ENCODE measurements at regions of chrX and their contacts with region 1.

Region 1: GRCh38 chrX:30713061-30713525 is 59.9 kb downstream of the GK start:
- DNase-seq: peak in 3 of 4 experiments; percentile 5 to 63 (median 38)
- ATAC-seq: peak; percentile 88
- H3K4me3 ChIP-seq: no peak overlapping the region
- H3K27ac ChIP-seq: no peak overlapping the region
- H3K4me1 ChIP-seq: no peaks in the 10 kb centered on the region
- H3K27me3 ChIP-seq: no peaks in the 10 kb centered on the region
- CTCF ChIP-seq: peak; percentile 72 to 81 (median 73)
- EP300 ChIP-seq: no peak
- POLR2A ChIP-seq: no peak
- RAD21 ChIP-seq: peak; percentile 73 to 83

Region 2: GRCh38 chrX:30196322-30196721 is 516.8 kb before region 1 on chrX:
- CTCF ChIA-PET with region 1: no interaction called
- POLR2A ChIA-PET with region 1: no interaction called
- in situ Hi-C with region 1: no loop called
- intact Hi-C with region 1: no loop called
- DNase-seq: peak; percentile 17 to 49 (median 40)
- ATAC-seq: peak; percentile 73
- H3K4me3 ChIP-seq: no peak overlapping the region
- H3K27ac ChIP-seq: no peak overlapping the region
- H3K4me1 ChIP-seq: no peaks in the 10 kb centered on the region
- H3K27me3 ChIP-seq: no peaks in the 10 kb centered on the region
- CTCF ChIP-seq: peak in 2 of 3 experiments; percentile 4 to 43; a peak in 3 of 6 replicates
- EP300 ChIP-seq: no peak
- POLR2A ChIP-seq: no peak
- RAD21 ChIP-seq: no peak; a peak in 1 of 4 replicates

Region 3: GRCh38 chrX:30570505-30570904 is 142.6 kb before region 1 on chrX:
- CTCF ChIA-PET with region 1: interaction called, 6 read pairs
- POLR2A ChIA-PET with region 1: no interaction called
- in situ Hi-C with region 1: loop called (anchors 5 kb)
- intact Hi-C with region 1: loop called (anchors 1 kb)
- DNase-seq: peak in 3 of 4 experiments; percentile 17 to 21 (median 18)
- ATAC-seq: no peak
- H3K4me3 ChIP-seq: no peak overlapping the region
- H3K27ac ChIP-seq: no peak overlapping the region
- H3K4me1 ChIP-seq: no peaks in the 10 kb centered on the region
- H3K27me3 ChIP-seq: no peaks in the 10 kb centered on the region
- CTCF ChIP-seq: peak in 1 of 3 experiments; percentile 55; a peak in 3 of 6 replicates
- EP300 ChIP-seq: no peak
- POLR2A ChIP-seq: no peak
- RAD21 ChIP-seq: peak; percentile 39 to 49

Region 4: DNA sequence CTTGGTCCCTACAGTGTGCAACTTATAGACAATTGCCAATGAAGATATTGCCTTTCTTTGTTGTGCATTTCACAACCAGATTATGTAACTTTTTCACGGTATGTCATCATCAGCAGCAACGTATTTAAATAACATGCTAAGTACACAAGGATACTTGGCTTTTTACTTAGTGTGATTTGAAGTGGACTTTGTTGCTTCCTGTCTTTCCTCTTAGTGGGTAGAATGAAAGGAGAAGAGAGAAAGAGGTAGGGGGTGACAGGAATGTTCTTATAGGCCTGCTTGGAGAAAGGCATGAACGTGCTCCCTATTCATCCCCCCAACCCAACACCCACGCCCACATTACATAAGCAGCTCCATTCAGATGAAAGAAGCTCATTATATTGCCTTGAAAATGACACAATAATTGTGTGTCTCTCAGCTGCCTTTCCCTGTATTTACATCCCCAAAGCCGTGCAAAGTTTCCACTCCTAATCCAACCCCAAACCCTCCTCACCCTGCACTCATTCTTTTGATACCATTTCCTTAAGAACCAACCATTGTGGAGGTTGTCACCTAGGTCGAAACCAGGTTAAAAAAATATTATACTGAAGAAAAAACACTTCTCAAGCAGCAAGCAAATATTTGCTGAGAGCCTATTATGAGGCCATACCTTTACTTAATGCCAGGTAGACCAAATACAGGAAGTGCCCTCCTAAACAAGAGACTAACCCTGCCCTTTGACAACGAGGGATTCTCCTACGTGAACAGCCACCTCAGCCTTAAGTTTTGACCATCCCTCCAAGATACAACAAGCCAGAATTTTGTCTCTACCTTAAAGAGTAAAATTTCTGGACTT is 85.1 kb before region 1 on chrX:
- CTCF ChIA-PET with region 1: no interaction called
- POLR2A ChIA-PET with region 1: no interaction called
- in situ Hi-C with region 1: loop called (anchors 5 kb)
- intact Hi-C with region 1: no loop called
- DNase-seq: no peak
- ATAC-seq: no peak; the same call in 1 of the 3 replicates
- H3K4me3 ChIP-seq: no peak overlapping the region
- H3K27ac ChIP-seq: no peak overlapping the region
- H3K4me1 ChIP-seq: no peaks in the 10 kb centered on the region; a peak in 1 of 5 replicates
- H3K27me3 ChIP-seq: no peaks in the 10 kb centered on the region
- CTCF ChIP-seq: no peak
- EP300 ChIP-seq: no peak
- POLR2A ChIP-seq: no peak
- RAD21 ChIP-seq: no peak

Region 5: DNA sequence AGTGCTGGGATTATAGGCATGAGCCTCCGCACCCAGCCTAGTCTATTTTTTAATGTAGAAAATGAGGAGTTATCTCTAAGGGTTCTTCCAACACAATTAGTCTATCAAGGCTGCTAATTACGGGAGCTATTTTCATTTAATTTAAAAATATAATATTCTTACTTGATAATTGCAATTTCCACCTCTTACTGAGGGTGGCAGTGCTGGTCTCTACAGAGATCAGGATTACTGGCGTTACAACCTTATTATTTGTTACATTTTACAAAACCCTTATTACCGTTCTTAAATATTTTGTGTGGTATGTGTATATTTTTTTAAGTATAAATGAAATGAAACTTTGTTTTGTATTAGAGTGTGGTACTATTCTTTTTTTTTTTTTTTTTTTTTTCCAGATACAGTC is 77.5 kb before region 1 on chrX:
- CTCF ChIA-PET with region 1: interaction called, 16 read pairs
- POLR2A ChIA-PET with region 1: no interaction called
- in situ Hi-C with region 1: no loop called
- intact Hi-C with region 1: loop called (anchors 1 kb)
- DNase-seq: peak; percentile 12 to 29 (median 16)
- ATAC-seq: peak; percentile 68
- H3K4me3 ChIP-seq: no peak overlapping the region
- H3K27ac ChIP-seq: no peak overlapping the region
- H3K4me1 ChIP-seq: no peaks in the 10 kb centered on the region; a peak in 1 of 5 replicates
- H3K27me3 ChIP-seq: no peaks in the 10 kb centered on the region
- CTCF ChIP-seq: peak in 2 of 3 experiments; percentile 47 to 74; a peak in 3 of 6 replicates
- EP300 ChIP-seq: no peak
- POLR2A ChIP-seq: no peak
- RAD21 ChIP-seq: peak; percentile 65 to 80

Region 6: GRCh38 chrX:30748393-30748841 is 35.3 kb after region 1 on chrX:
- CTCF ChIA-PET with region 1: no interaction called
- POLR2A ChIA-PET with region 1: no interaction called
- in situ Hi-C with region 1: no loop called
- intact Hi-C with region 1: no loop called
- DNase-seq: peak; percentile 17 to 51 (median 25)
- ATAC-seq: peak; percentile 72
- H3K4me3 ChIP-seq: no peak overlapping the region
- H3K27ac ChIP-seq: no peak overlapping the region
- H3K4me1 ChIP-seq: no peaks in the 10 kb centered on the region; a peak in 1 of 5 replicates
- H3K27me3 ChIP-seq: no peaks in the 10 kb centered on the region
- CTCF ChIP-seq: no peak
- EP300 ChIP-seq: no peak
- POLR2A ChIP-seq: no peak
- RAD21 ChIP-seq: no peak

Measured in K562 (cell line).